PC-3 (cell line): ENCODE measurements at regions of chr11 and their contacts with region 1.

Region 1: DNA sequence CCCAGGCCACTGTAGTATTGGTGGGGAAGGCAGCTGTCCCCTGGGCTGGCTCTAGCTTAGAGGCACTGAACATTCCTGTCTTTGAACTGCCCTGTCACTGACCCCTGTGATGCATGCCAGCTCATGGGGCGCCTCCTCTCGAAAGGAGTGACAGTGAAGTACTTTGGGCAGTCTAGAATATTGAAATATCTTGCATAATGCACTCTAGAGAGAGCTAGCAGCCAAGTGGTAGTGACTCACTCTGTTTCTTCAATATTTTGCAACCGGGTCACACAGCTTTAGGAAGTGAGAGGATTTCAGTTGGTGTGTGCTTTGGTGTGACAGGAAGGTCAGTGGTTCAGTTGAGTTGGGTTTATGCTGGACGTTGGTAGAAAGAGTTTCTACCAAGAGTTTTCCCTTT is 35.5 kb upstream of the ST14 start:
- DNase-seq: peak; percentile 96
- ATAC-seq: peak; percentile 94
- H3K4me3 ChIP-seq: peak overlapping the region; percentile 11; the same call in 1 of the 2 replicates
- H3K27ac ChIP-seq: peak overlapping the region; percentile 62
- H3K4me1 ChIP-seq: peaks cover 16% of the 10 kb centered on the region
- H3K27me3 ChIP-seq: no peaks in the 10 kb centered on the region
- CTCF ChIP-seq: peak; percentile 38

Region 2: GRCh38 chr11:130069684-130070108 is 54.4 kb before region 1 on chr11 and contains the start of gene APLP2:
- CTCF ChIA-PET with region 1: no interaction called
- POLR2A ChIA-PET with region 1: interaction called, 4 read pairs
- intact Hi-C with region 1: loop called (anchors 1 kb)
- DNase-seq: peak; percentile 99
- ATAC-seq: peak; percentile 77
- H3K4me3 ChIP-seq: peak within 1 kb of the TSS; percentile 78
- H3K27ac ChIP-seq: peak within 1 kb of the TSS; percentile 77
- H3K4me1 ChIP-seq: peaks cover 22% of the 10 kb centered on the region
- H3K27me3 ChIP-seq: no peaks in the 10 kb centered on the region
- CTCF ChIP-seq: no peak
- total RNA-seq, gene APLP2: 345 and 371 TPM in 2 replicates